Activated CD8-positive, alpha-beta T cell treated with anti-CD3 and anti-CD28 coated beads, Interleukin-2, amount 10 ng/mL, durations not matched to agents 7 days and 5 days (primary cell): ENCODE measurements at regions of chrX and their contacts with region 1.

Region 1: GRCh38 chrX:30735839-30736238 is 82.6 kb downstream of the GK start:
- DNase-seq: peak; percentile 81
- ATAC-seq: peak; percentile 83
- H3K4me3 Mint-ChIP-seq: no peak overlapping the region
- H3K27ac Mint-ChIP-seq: no peak overlapping the region
- H3K4me1 Mint-ChIP-seq: no peaks in the 10 kb centered on the region
- H3K27me3 Mint-ChIP-seq: no peaks in the 10 kb centered on the region

Region 2: DNA sequence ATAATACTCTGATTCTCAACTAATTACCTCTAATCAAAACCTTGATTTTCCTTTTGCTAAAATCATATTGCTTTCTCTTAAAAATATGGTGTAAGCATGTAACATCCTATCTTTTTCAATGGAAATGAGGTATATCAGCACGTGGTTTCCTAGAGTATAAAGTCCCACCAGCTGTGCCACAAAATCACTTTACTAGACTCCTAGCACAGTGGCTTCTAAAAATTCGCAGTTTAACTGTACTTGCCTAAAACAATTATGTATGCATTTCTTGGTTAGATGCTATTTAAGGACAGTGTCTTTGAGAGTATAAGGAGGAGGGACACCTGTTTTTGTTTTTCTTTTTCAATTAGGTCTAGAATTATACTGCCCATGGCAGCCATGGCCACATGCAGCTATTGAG is 19.9 kb before region 1 on chrX:
- CTCF ChIA-PET with region 1: interaction called, 11 read pairs
- POLR2A ChIA-PET with region 1: no interaction called
- DNase-seq: no peak
- ATAC-seq: no peak
- H3K4me3 Mint-ChIP-seq: no peak overlapping the region
- H3K27ac Mint-ChIP-seq: no peak overlapping the region
- H3K4me1 Mint-ChIP-seq: peaks cover 47% of the 10 kb centered on the region
- H3K27me3 Mint-ChIP-seq: no peaks in the 10 kb centered on the region

Region 3: DNA sequence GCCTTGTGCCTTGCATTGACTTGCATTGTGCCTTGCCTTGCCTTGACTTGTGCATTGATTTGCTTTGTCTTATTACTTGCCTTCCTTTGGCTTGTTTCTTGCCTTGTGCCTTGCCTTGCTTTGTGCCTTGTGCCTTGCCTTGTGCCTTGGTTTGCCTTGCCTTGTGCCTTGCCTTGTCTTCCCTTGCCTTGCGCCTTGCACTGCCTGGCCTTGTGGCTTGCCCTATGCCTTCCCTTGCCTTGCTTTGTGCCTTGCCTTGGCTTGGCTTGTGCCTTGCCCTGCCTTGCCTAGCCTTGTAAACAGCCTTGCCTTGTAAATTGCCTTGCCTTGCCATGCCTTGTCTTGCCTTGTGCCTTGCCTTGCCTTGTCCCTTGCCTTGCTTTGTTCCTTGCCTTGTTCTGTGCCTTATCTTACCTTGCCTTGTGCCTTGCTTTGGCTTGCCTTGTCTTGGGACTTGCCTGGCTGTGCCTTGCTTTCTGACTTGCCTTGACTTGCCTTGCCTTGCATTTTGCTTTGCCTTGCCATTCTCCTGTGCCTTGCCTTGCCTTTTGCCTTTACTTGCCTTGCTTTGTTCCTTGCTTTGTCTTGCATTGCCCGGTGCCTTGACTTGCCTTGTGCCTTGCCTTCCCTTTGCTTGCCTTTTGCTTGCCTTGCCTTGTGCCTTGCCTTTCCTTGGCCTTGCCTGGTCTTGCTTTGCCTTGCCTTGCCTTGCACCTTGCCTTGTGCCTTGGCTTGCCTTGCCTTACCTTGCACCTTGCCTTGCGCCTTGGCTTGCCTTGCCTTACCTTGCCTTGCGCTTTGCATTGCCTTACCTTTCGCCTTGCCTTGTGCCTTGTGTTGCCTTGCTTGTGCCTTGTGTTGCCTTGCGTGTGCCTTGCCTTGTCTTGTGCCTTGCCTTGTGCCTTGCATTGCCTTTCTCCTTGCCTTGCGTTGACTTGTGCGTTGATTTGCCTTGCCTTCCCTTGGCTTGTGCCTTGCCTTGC is 55.7 kb after region 1 on chrX:
- CTCF ChIA-PET with region 1: no interaction called
- POLR2A ChIA-PET with region 1: no interaction called
- DNase-seq: no peak
- ATAC-seq: no peak
- H3K4me3 Mint-ChIP-seq: no peak overlapping the region
- H3K27ac Mint-ChIP-seq: no peak overlapping the region
- H3K4me1 Mint-ChIP-seq: no peaks in the 10 kb centered on the region
- H3K27me3 Mint-ChIP-seq: no peaks in the 10 kb centered on the region

Region 4: GRCh38 chrX:30865015-30865414 is 129.2 kb after region 1 on chrX:
- CTCF ChIA-PET with region 1: interaction called, 11 read pairs
- POLR2A ChIA-PET with region 1: no interaction called
- DNase-seq: peak; percentile 24
- ATAC-seq: peak; percentile 51
- H3K4me3 Mint-ChIP-seq: no peak overlapping the region
- H3K27ac Mint-ChIP-seq: no peak overlapping the region
- H3K4me1 Mint-ChIP-seq: peaks cover 3% of the 10 kb centered on the region
- H3K27me3 Mint-ChIP-seq: no peaks in the 10 kb centered on the region

Region 5: DNA sequence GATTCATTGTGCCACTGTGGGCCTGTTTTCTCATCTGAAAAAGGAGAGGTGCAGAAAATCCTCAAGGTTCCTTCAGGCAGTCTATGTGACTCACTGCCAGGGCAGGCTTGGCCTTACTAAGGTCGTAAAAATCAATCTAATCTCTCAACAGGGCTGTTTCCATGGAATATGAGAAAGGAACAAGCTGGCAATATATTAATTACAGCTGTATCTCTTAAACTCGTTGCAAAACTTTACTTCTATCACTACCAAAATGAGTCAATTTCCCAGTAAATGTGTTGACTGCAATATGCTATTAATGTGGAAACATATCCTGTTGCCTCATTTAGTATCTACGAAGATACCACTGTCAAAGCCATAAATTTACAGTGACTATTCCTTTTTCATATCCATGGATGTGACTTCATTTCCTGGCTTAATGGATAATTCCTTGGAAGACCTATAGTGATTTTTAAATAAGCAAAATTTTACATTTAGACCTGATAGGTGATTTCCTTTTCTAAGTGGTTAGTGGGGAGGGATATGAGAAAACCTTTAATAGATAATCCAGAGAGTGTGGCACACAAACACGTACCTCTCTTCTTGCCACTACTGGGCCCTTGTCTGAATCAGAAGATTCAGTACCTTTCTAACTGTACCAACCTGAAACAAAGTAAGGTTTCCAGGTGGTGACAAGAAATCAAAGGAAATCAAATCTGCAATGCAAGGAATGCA is 463.4 kb after region 1 on chrX:
- CTCF ChIA-PET with region 1: no interaction called
- POLR2A ChIA-PET with region 1: no interaction called
- DNase-seq: no peak
- ATAC-seq: no peak
- H3K4me3 Mint-ChIP-seq: no peak overlapping the region
- H3K27ac Mint-ChIP-seq: no peak overlapping the region
- H3K4me1 Mint-ChIP-seq: no peaks in the 10 kb centered on the region
- H3K27me3 Mint-ChIP-seq: no peaks in the 10 kb centered on the region